ENCODE measurements at regions of chr2 and their contacts with region 1.

Region 1: DNA sequence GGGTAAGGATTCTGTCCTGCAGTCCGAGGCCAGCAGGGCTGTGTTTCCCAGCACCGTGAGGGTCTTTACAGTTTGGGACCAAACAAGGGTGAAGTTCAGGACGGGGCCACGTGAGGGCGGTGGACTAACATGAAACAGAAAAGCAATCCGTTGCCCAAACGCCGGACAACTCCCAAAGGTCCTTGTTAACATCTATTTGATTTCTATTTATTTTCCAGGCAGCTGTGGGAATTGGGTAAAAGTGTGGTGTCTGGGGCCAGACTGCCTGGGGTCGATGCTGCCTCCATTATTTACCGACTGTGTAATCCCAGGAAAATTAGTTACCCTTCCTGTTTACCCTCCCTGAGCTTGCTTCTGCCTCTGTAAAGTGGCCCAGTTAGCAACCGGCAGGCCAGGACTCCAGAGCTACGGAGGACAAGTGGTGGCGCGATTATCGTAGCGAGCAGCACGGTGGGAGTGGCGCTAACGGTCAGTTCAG is 66.3 kb upstream of the TCF7L1 start:
- DNase-seq: peak; percentile 79 to 92 (median 87)
- ATAC-seq: peak; percentile 84 to 85
- H3K4me3 ChIP-seq: peak overlapping the region; percentile 61
- H3K27ac ChIP-seq: no peak overlapping the region
- H3K4me1 ChIP-seq: no peaks in the 10 kb centered on the region
- H3K27me3 ChIP-seq: no peaks in the 10 kb centered on the region

Region 2: GRCh38 chr2:85119900-85120299 is 53.0 kb after region 1 on chr2:
- intact Hi-C with region 1: loop called in 1 of 4 experiments (anchors 10 kb)
- DNase-seq: no peak
- ATAC-seq: no peak
- H3K4me3 ChIP-seq: no peak overlapping the region
- H3K27ac ChIP-seq: no peak overlapping the region
- H3K4me1 ChIP-seq: no peaks in the 10 kb centered on the region
- H3K27me3 ChIP-seq: no peaks in the 10 kb centered on the region

Region 3: GRCh38 chr2:85302121-85302520 is 235.2 kb after region 1 on chr2:
- intact Hi-C with region 1: loop called (anchors 2 to 5 kb)
- DNase-seq: no peak
- ATAC-seq: peak; percentile 30 to 46
- H3K4me3 ChIP-seq: no peak overlapping the region
- H3K27ac ChIP-seq: no peak overlapping the region
- H3K4me1 ChIP-seq: no peaks in the 10 kb centered on the region
- H3K27me3 ChIP-seq: no peaks in the 10 kb centered on the region

Region 4: GRCh38 chr2:85308896-85309555 is 242.1 kb after region 1 on chr2:
- intact Hi-C with region 1: loop called in 1 of 4 experiments (anchors 5 kb)
- DNase-seq: peak; percentile 73 to 90 (median 90)
- ATAC-seq: peak; percentile 70 to 73
- H3K4me3 ChIP-seq: no peak overlapping the region
- H3K27ac ChIP-seq: no peak overlapping the region
- H3K4me1 ChIP-seq: no peaks in the 10 kb centered on the region
- H3K27me3 ChIP-seq: no peaks in the 10 kb centered on the region